MCF 10A (cell line): ENCODE measurements at regions of chr15 and their contacts with region 1.

Region 1: DNA sequence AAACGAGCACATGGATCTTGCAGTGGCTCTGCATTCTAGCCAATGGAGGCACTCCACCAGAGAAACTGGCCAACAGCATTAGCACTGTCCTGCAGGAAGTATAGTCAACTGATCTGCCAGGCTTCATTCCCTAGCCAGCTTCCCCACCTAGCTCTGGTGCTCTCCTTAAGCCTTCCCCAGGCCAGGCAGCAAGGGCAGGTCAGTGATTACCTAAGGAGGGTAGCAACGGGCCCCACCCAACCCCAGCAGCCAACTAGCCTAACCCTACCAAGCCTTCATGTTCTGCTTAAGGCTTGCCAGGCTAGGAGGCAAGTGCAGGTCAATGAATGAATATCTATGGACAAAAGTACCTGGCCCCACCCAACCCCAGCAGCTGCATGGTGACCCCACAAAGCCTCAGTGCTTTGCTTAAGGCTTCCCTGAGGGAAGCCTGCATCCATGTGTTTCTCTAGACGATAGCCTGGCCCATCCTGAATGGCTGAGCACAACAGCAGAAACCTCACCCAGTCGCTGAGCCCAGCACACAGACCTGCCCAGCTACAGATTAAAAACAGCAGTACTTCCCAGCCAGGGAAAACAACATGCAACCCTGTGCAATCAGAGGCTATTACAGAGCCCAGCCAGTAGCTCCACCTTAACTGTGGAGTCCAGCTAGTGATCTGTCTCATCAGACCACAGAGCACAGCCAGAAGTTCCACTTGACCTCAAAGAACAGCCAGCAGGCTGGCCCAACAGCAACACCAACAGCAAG is 28.5 kb downstream of the THBS1 start:
- DNase-seq: no peak
- H3K4me3 Mint-ChIP-seq: no peak overlapping the region
- H3K27ac Mint-ChIP-seq: no peak overlapping the region
- H3K4me1 Mint-ChIP-seq: peaks cover 17% of the 10 kb centered on the region
- H3K27me3 Mint-ChIP-seq: no peaks in the 10 kb centered on the region
- CTCF ChIP-seq: no peak

Region 2: DNA sequence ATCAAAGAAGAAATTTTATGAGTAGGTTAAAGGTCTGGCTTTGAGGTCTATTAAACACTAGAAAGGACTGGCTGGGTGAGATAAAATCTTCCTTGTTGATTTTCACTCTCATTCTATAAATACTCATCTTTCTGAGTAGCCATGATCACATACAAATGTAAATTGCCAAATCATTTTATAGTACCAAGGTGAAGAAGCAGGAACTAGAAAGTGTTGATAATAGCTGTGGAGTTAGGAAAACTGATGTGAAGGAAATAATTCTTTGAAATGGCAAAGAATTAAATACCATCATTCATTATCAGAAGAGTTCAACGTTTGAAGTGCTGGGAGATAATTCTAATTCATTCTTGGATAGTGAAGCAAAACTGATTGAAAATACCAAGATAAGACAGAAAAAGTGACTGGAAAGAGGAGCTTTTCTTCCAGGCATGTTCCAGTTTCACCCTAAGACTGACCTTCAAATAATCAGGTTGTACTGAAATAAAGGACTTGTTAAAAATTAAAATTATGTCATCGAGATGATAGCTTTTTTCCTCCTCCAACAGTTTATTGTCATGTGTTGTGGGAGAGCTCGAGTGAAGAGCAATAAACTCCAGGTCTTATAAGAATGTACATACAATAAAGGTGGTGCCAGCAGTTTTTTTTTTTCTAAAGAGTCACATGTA is 11.0 kb before region 1 on chr15:
- CTCF ChIA-PET with region 1: no interaction called
- POLR2A ChIA-PET with region 1: interaction called, 12 read pairs
- intact Hi-C with region 1: no loop called
- DNase-seq: no peak
- H3K4me3 Mint-ChIP-seq: no peak overlapping the region
- H3K27ac Mint-ChIP-seq: no peak overlapping the region
- H3K4me1 Mint-ChIP-seq: peaks cover 17% of the 10 kb centered on the region
- H3K27me3 Mint-ChIP-seq: no peaks in the 10 kb centered on the region
- CTCF ChIP-seq: no peak

Region 3: GRCh38 chr15:39624806-39625205 is 15.5 kb after region 1 on chr15:
- CTCF ChIA-PET with region 1: interaction called, 15 read pairs
- POLR2A ChIA-PET with region 1: interaction called, 3 read pairs
- intact Hi-C with region 1: no loop called
- DNase-seq: peak; percentile 87
- H3K4me3 Mint-ChIP-seq: peak overlapping the region; percentile 11
- H3K27ac Mint-ChIP-seq: peak overlapping the region; percentile 99
- H3K4me1 Mint-ChIP-seq: peaks cover 32% of the 10 kb centered on the region
- H3K27me3 Mint-ChIP-seq: no peaks in the 10 kb centered on the region
- CTCF ChIP-seq: no peak